Breast epithelium (tissue), 4 donors: ENCODE measurements at regions of chr14 and their contacts with region 1.

Region 1: DNA sequence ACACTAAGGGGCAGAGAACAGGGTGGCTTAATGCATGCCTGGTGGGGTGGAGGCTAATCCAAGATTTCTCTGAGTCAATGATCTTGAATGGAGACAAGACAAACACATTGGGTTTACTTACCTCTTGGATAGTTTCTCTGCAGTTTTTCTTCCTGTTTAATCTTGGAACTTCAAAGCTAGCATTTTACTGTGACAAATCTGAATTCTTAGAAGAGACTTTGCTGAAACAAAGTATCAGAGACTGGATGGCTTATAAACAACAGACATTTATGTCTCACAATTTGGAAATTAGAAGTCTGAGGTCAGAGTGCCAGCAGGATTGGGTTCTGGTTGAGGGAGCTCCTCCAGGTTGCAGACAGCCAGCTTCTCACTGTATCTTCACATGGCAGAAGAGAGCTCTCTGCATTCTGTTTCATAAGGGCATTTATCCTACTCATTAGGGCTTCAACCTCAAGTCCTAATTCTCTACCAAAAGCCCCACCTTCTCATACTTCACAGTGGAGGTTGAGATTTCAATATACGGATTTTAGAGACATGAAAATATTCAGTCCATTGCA is 921.8 kb downstream of the VRK1 start:
- DNase-seq: no peak
- H3K4me3 ChIP-seq: no peak overlapping the region
- H3K27ac ChIP-seq: no peak overlapping the region
- H3K4me1 ChIP-seq: no peaks in the 10 kb centered on the region
- H3K27me3 ChIP-seq: no peaks in the 10 kb centered on the region
- CTCF ChIP-seq: no peak
- POLR2A ChIP-seq: no peak

Region 2: GRCh38 chr14:97625477-97625876 is 93.5 kb before region 1 on chr14:
- intact Hi-C with region 1: no loop called
- DNase-seq: no peak
- H3K4me3 ChIP-seq: no peak overlapping the region
- H3K27ac ChIP-seq: no peak overlapping the region
- H3K4me1 ChIP-seq: no peaks in the 10 kb centered on the region
- H3K27me3 ChIP-seq: peaks cover 0 to 3% of the 10 kb centered on the region in 2 donors
- CTCF ChIP-seq: no peak
- POLR2A ChIP-seq: no peak

Region 3: DNA sequence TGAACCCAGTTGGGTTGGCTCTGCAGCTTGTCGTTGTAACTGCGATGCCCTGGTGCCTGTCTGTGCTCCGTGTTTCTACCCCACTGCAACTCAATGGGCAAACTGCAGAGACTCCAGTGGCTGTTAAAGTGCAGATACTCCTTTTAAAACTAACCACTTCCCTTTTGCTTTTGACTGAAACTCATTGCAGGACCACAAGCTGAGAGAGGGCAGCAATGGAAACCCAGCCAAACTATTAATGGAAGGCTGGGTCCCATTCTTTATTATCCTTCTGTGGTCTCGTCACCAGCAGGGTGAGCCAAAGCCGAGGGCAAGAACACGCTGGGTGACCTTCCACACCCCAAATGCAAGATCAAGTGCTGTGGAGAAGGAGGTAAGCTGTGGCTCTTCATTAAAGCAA is 11.4 kb before region 1 on chr14:
- intact Hi-C with region 1: loop called (anchors 1 kb)
- DNase-seq: no peak
- H3K4me3 ChIP-seq: no peak overlapping the region
- H3K27ac ChIP-seq: no peak overlapping the region
- H3K4me1 ChIP-seq: no peaks in the 10 kb centered on the region
- H3K27me3 ChIP-seq: no peaks in the 10 kb centered on the region
- CTCF ChIP-seq: peak in 1 of 3 donors; percentile 11
- POLR2A ChIP-seq: no peak